Posterior cingulate gyrus (tissue), 11 donors: ENCODE measurements at regions of chr6 and their contacts with region 1.

Region 1: GRCh38 chr6:113994918-113995342 is 24.0 kb upstream of the HDAC2 start:
- DNase-seq: peak in 8 of 10 donors; percentile 45 to 94 (median 70)

Region 2: GRCh38 chr6:113842153-113842552 is 152.8 kb before region 1 on chr6:
- intact Hi-C with region 1: no loop called
- DNase-seq: no peak

Region 3: GRCh38 chr6:113920663-113921267 is 74.2 kb before region 1 on chr6:
- intact Hi-C with region 1: no loop called
- DNase-seq: no peak

Region 4: GRCh38 chr6:113944701-113945100 is 50.2 kb before region 1 on chr6:
- intact Hi-C with region 1: no loop called
- DNase-seq: no peak

Region 5: DNA sequence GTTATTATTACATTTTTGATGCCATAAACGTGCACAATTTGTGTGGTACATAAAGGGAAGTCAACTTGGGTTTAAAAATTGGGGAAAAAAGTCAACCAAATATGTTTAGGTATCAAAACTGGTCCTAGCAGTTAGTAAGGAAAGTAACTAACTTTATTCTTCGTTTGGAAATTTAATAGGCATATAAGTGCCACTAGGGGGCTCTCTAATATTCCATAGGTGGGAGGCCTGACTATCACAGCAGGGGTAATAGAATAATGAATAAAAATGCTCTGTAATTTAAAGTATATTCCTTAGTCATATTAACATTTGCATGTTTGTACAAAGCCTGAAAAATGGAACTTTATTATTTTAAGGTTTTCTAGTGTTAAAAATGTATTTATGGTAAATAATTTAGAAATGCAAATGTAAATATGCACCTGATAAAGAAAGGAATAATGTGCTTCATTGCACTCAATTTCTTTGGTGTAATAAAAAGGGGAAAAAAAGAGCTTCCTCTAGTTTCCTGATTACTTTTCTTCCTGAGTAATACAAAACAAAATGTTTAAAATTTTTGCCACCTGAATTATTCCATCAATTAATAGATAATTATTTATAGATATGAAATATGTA is 101.7 kb after region 1 on chr6:
- intact Hi-C with region 1: loop called (anchors 1 kb)
- DNase-seq: no peak

Region 6: GRCh38 chr6:114108119-114109002 is 113.4 kb after region 1 on chr6:
- intact Hi-C with region 1: loop called (anchors 2 kb)
- DNase-seq: peak in 9 of 10 donors; percentile 31 to 94 (median 73)

Region 7: GRCh38 chr6:114342826-114343780 is 348.2 kb after region 1 on chr6 and contains the start of gene HS3ST5:
- intact Hi-C with region 1: loop called (anchors 1 kb)
- DNase-seq: peak; percentile 57 to 96 (median 72)

Region 8: GRCh38 chr6:115896538-115897129 is 1901.7 kb after region 1 on chr6:
- intact Hi-C with region 1: loop called (anchors 10 kb)
- DNase-seq: no peak